ENCODE measurements at regions of chr20 and their contacts with region 1.

Region 1: DNA sequence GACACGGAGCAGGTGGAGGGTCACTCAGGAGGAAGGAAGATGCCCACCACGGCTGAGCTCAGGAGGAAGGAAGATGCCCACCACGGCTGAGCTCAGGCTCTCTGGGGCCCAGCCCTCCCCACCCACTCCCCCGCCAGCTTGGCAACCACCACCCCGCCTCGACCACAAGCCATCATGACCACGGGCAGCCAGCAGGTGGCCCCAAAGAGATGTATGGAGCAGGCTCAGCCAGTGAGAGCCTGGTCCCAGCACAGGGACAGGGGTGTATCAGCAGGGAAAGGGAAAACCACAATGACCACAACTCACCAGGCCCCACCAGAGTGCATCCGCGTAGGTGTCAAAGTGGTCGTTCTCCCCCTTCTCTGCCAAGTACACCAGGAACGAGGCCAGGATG is 30.4 kb downstream of the KCNQ2 start:
- DNase-seq: peak; percentile 80
- ATAC-seq: no peak

Region 2: DNA sequence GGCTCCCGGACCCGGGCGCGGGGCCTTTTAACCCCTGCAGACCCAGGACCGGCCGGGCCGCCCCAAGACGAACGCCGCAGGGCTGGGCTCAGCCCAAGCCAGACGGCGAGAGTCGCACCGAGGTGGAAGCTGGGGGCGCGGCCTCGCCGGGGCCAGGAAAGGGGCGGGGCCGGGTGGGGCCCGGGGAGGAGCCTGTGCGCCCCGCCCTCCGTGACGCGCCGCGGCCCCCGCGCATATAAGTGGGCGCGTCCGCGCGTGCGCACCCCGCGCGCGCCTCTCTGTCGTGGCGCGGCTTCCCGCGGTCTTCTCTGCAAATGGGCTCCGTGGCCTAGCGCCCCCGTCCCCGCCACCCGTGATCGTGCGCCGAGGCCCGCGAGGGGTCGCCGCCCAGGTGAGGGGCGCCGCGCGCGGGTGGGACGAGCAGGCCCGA is 78.4 kb after region 1 on chr20 and contains the start of gene PPDPF:
- intact Hi-C with region 1: loop called (anchors 2 kb)
- DNase-seq: peak; percentile 95
- ATAC-seq: peak; percentile 93
- total RNA-seq, gene PPDPF: 261 TPM

Region 3: GRCh38 chr20:63537525-63538203 is 95.6 kb after region 1 on chr20:
- intact Hi-C with region 1: no loop called
- DNase-seq: peak; percentile 92
- ATAC-seq: peak; percentile 91

Region 4: DNA sequence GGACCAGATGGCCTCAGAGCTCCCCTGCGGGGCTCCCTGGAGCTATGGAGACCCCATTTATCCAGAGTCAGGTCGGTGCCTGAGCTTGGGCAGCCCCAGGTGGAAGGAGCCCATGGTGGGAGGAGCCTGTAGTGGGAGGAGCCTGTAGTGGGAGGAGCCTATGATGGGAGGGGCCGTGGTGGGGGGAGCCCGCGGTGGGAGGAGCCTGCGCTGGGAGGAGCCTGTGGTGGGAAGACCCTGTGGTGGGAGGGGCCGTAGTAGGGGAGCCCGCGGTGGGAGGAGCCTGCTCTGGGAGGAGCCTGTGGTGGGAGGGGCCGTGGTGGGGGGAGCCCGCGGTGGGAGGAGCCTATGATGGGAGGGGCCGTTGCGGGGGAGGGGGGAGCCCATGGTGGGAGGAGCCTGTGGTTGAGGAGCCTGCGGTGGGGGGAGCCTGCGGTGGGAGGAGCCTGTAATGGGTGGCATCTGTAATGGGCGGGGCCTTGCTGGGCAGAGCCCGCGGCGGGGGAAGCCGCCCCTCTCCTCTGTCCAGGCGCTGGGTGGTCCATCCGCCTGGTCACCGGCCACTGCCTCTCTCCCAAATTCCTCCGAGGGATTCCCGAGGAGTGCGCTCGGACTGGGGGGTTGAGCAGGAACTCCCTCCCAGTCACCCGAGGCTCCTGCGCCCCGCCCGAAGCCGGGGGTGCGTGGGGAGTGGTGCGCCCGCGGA is 111.3 kb after region 1 on chr20:
- intact Hi-C with region 1: no loop called
- DNase-seq: peak; percentile 89
- ATAC-seq: peak; percentile 84

Region 5: GRCh38 chr20:63577317-63577894 is 135.3 kb after region 1 on chr20:
- intact Hi-C with region 1: loop called (anchors 5 kb)
- DNase-seq: no peak
- ATAC-seq: peak; percentile 45